WTC11 (cell line): ENCODE measurements at regions of chr3 and their contacts with region 1.

Region 1: GRCh38 chr3:14915636-14916222 is 31.7 kb upstream of the NR2C2 start:
- DNase-seq: no peak
- ATAC-seq: no peak
- H3K4me3 Mint-ChIP-seq: no peak overlapping the region
- H3K27ac Mint-ChIP-seq: no peak overlapping the region
- H3K4me1 Mint-ChIP-seq: peaks cover 6% of the 10 kb centered on the region
- H3K27me3 Mint-ChIP-seq: no peaks in the 10 kb centered on the region
- CTCF ChIP-seq: no peak

Region 2: GRCh38 chr3:14791343-14791945 is 124.3 kb before region 1 on chr3:
- CTCF ChIA-PET with region 1: interaction called, 74 read pairs
- POLR2A ChIA-PET with region 1: no interaction called
- DNase-seq: peak; percentile 86
- ATAC-seq: peak; percentile 95
- H3K4me3 Mint-ChIP-seq: peak overlapping the region; percentile 57
- H3K27ac Mint-ChIP-seq: no peak overlapping the region
- H3K4me1 Mint-ChIP-seq: peaks cover 8% of the 10 kb centered on the region
- H3K27me3 Mint-ChIP-seq: no peaks in the 10 kb centered on the region
- CTCF ChIP-seq: peak; percentile 82

Region 3: DNA sequence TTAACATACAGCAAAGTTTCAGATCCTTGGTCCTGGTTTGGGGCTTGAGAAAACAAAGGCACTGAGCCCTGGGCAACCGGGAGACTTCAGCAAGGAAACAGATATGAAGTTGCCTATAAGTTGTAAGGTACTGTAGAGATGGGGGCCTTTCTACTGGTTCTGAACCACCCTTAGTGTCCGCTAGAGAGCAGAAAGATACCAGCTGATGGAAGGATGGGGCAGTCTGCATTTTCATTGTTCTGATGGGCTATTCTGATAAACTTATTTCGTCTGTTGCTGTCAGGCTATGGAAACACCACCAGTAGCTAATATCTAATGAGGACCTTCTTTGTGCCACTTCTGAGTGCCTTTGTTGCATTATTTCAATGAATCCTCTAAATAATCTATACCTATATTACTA is 58.2 kb before region 1 on chr3:
- CTCF ChIA-PET with region 1: interaction called, 29 read pairs
- POLR2A ChIA-PET with region 1: no interaction called
- DNase-seq: no peak
- ATAC-seq: peak; percentile 71
- H3K4me3 Mint-ChIP-seq: no peak overlapping the region
- H3K27ac Mint-ChIP-seq: no peak overlapping the region
- H3K4me1 Mint-ChIP-seq: peaks cover 24% of the 10 kb centered on the region
- H3K27me3 Mint-ChIP-seq: no peaks in the 10 kb centered on the region; the same call in 1 of the 2 replicates
- CTCF ChIP-seq: no peak

Region 4: DNA sequence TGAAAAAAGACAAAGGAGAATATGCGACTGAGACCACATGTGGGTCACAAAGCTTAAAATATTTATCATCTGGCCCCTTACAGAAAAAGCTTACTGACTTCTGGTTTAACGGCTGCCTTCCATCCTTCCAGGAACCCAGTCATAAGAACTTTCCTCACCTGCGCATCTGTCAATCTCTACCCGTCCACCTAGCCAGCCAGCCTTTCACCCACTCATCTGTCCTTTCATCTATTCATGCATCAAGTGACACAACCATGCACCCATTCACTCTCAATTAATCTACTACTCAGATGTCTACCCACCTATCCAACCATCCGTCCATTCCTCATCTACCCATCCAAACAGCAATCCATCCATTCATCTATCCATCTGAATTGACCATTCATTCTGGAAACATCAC is 32.5 kb before region 1 on chr3:
- CTCF ChIA-PET with region 1: no interaction called
- POLR2A ChIA-PET with region 1: no interaction called
- DNase-seq: no peak
- ATAC-seq: no peak
- H3K4me3 Mint-ChIP-seq: no peak overlapping the region
- H3K27ac Mint-ChIP-seq: no peak overlapping the region
- H3K4me1 Mint-ChIP-seq: peaks cover 15% of the 10 kb centered on the region
- H3K27me3 Mint-ChIP-seq: no peaks in the 10 kb centered on the region
- CTCF ChIP-seq: no peak